GM12878 (cell line): ENCODE measurements at regions of chr5 and their contacts with region 1.

Region 1: GRCh38 chr5:61319388-61320146 is 12.5 kb upstream of the ZSWIM6 start:
- DNase-seq: peak; percentile 88
- ATAC-seq: peak; percentile 99
- H3K4me3 ChIP-seq: peak overlapping the region; percentile 42; the same call in 1 of the 2 replicates
- H3K27ac ChIP-seq: peak overlapping the region; percentile 61
- H3K4me1 ChIP-seq: peaks cover 26% of the 10 kb centered on the region
- H3K27me3 ChIP-seq: 0 out of 4 replicates have a peak, but pooled peaks cover 0 to 5% of the 10 kb centered on the region in 2 experiments
- CTCF ChIP-seq: no peak
- EP300 ChIP-seq: peak; percentile 80 to 83; a peak in 3 of 4 replicates
- POLR2A ChIP-seq: no peak
- RAD21 ChIP-seq: peak; percentile 31; the same call in 1 of the 2 replicates

Region 2: GRCh38 chr5:61115968-61116367 is 203.6 kb before region 1 on chr5:
- CTCF ChIA-PET with region 1: no interaction called
- POLR2A ChIA-PET with region 1: no interaction called
- RAD21 ChIA-PET with region 1: no interaction called
- SMC1A ChIA-PET with region 1: no interaction called
- in situ Hi-C with region 1: no loop called
- intact Hi-C with region 1: no loop called
- DNase-seq: peak; percentile 11
- ATAC-seq: peak; percentile 87
- H3K4me3 ChIP-seq: no peak overlapping the region
- H3K27ac ChIP-seq: no peak overlapping the region
- H3K4me1 ChIP-seq: no peaks in the 10 kb centered on the region
- H3K27me3 ChIP-seq: no peaks in the 10 kb centered on the region
- CTCF ChIP-seq: no peak
- EP300 ChIP-seq: no peak
- POLR2A ChIP-seq: no peak
- RAD21 ChIP-seq: no peak

Region 3: DNA sequence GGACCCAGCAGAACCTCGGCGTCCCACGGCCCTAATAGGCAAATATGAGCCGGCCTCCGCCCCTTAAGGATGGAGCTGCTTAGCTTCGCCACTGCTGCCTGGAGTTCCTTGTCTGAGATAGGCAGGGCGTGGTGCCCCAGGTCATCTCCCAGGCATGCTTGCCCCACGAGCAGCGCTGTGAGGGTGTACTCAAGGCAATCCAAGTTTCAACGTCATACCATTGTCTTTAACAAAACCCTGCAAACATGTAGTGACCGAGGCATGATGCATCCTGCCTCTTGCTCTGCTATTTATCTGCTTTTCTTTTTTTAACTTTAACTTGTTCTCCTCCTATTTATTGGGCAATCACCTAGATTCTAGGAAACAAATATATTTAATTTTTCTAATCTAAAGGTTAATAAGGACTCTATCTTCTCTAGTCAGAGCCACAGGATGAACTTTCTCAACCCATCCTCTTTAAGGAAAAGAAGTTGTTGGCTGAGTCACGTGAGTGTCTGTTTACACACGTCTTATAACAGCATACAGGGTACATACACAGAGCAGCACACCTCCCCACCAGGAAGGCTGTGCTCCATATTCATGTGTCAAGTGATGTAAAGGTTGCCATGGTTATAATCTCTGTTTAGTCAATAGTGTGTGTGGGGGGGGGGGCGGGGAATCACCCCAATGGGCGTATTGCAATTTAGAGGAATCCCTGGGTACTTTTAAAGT is 14.8 kb before region 1 on chr5:
- CTCF ChIA-PET with region 1: interaction called, 5 read pairs
- POLR2A ChIA-PET with region 1: interaction called, 3 read pairs
- RAD21 ChIA-PET with region 1: no interaction called
- SMC1A ChIA-PET with region 1: interaction called, 11 read pairs
- in situ Hi-C with region 1: no loop called
- intact Hi-C with region 1: no loop called
- DNase-seq: no peak
- ATAC-seq: peak; percentile 37; the same call in 2 of the 3 replicates
- H3K4me3 ChIP-seq: no peak overlapping the region
- H3K27ac ChIP-seq: no peak overlapping the region
- H3K4me1 ChIP-seq: peaks cover 15% of the 10 kb centered on the region
- H3K27me3 ChIP-seq: no peaks in the 10 kb centered on the region
- CTCF ChIP-seq: no peak
- EP300 ChIP-seq: no peak
- POLR2A ChIP-seq: no peak
- RAD21 ChIP-seq: no peak